PC-9 (cell line): ENCODE measurements at regions of chr7 and their contacts with region 1.

Region 1: DNA sequence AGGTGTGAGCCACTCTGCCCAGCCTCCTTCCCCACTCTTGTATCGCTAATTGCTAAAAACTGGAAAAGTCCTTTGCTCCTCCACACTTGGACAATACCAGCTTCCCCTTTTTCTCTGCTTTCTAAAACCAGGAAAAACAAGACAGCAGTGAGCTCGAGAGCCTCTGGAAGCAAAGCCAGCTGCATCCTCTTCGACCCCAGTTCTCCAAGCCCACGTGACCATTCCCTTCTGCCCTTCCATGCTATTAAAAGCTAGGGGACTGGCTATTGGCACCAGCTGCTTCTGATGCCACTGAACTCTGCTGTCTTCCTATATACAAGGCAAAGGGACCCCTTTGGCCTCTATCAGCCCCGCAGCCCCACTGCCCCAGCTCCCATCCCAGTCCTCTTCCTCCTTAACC is 92.2 kb downstream of the SPDYE5 start:
- DNase-seq: no peak
- H3K4me3 ChIP-seq: no peak overlapping the region
- H3K27ac ChIP-seq: no peak overlapping the region
- H3K4me1 ChIP-seq: no peaks in the 10 kb centered on the region
- H3K27me3 ChIP-seq: no peaks in the 10 kb centered on the region
- CTCF ChIP-seq: no peak

Region 2: DNA sequence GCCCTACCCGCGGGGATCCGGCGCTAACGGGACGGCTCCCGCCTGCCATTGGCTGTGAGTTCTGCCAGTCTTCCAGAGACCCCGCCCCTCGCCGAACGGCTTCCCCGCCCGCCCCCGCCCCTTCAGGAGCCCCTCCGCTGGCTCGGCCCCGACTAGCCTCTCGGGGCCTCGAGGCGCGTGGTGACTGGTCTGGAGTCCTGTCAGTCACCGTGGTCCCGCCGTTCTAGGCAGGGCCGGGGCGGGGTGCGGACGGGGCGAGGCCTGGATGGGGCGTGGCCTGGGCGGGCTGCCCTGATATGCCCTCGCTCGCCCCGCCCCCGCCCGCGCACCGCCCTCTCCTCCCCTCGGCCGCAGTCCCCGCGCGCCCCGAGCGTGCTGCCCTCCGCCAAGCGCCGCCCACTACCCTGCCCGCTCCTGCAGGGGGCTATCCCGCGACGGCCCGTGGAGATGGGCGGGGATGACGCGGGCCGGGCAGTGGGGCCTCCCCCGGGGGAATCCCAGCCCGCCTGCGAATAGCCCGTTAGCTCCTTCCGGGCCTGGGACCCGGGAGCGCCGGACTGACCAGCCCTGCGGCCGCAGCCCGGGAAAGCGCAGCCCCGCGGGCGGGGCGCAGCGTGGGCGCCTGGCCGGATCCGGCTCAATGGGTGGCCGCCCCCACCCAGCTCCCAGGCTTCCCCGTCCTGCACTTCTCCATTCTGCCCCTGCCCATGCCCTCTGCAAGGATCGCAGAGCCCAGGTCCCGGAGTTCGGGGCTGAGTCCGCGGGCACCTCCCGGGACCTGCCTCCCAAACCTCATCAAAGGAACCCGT is 154.8 kb after region 1 on chr7:
- CTCF ChIA-PET with region 1: no interaction called
- POLR2A ChIA-PET with region 1: interaction called, 16 read pairs
- intact Hi-C with region 1: no loop called
- DNase-seq: peak; percentile 89 to 100
- H3K4me3 ChIP-seq: peak overlapping the region; percentile 88
- H3K27ac ChIP-seq: no peak overlapping the region
- H3K4me1 ChIP-seq: 0 out of 2 replicates have a peak, but pooled peaks cover 3% of the 10 kb centered on the region
- H3K27me3 ChIP-seq: no peaks in the 10 kb centered on the region
- CTCF ChIP-seq: no peak